ENCODE measurements at regions of chr9 and their contacts with region 1.

Region 1: DNA sequence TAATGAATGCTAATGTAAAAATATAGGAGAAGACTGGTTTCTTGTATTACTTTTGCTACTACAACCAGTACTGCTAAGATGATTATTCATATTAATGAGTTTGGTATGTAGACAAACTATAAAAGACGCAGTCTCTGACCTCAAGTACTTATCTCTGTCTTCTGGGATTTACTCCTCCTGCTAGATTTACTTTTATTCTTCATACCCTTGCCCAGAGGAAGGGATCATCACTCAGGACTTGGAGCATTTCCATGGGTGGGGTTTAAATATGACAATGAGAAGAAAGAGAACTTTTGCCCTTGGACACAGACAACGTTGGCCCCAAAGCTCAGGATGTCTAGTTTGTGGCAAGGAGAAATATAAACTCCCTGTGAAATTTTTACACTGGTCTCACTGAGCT is 126.1 kb downstream of the BNC2 start:
- DNase-seq: no peak
- ATAC-seq: no peak
- H3K4me3 ChIP-seq: no peak overlapping the region
- H3K4me3 Mint-ChIP-seq: no peak overlapping the region
- H3K27ac ChIP-seq: no peak overlapping the region
- H3K27ac Mint-ChIP-seq: no peak overlapping the region
- H3K4me1 ChIP-seq: no peaks in the 10 kb centered on the region
- H3K4me1 Mint-ChIP-seq: no peaks in the 10 kb centered on the region
- H3K27me3 ChIP-seq: no peaks in the 10 kb centered on the region
- H3K27me3 Mint-ChIP-seq: no peaks in the 10 kb centered on the region

Region 2: DNA sequence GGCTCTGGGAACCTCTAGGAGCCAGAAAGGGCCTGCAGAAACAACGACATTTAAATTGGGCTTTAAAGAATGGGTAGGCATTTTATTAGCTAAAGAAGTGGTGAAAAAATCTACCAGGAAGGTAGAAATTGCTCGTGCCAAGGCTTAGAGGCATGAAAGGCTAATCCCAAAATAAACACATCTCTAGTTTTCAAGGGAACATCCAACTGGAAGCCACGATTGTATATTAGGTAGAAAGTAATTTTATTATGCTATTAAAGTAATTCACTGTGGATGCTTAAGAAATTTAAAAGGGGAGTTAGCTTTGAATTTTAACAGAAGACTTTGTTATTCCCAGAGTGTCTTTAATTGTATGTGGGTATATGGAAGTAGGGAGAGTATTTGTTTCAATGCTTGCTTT is 373.0 kb after region 1 on chr9:
- CTCF ChIA-PET with region 1: interaction called in 1 of 2 experiments, 19 read pairs
- POLR2A ChIA-PET with region 1: no interaction called
- DNase-seq: no peak
- ATAC-seq: no peak
- H3K4me3 ChIP-seq: no peak overlapping the region
- H3K4me3 Mint-ChIP-seq: no peak overlapping the region
- H3K27ac ChIP-seq: no peak overlapping the region
- H3K27ac Mint-ChIP-seq: no peak overlapping the region
- H3K4me1 ChIP-seq: no peaks in the 10 kb centered on the region
- H3K4me1 Mint-ChIP-seq: no peaks in the 10 kb centered on the region
- H3K27me3 ChIP-seq: no peaks in the 10 kb centered on the region
- H3K27me3 Mint-ChIP-seq: no peaks in the 10 kb centered on the region

Measured in T-cell (primary cell).